ENCODE measurements at regions of chr20 and their contacts with region 1.

Region 1: DNA sequence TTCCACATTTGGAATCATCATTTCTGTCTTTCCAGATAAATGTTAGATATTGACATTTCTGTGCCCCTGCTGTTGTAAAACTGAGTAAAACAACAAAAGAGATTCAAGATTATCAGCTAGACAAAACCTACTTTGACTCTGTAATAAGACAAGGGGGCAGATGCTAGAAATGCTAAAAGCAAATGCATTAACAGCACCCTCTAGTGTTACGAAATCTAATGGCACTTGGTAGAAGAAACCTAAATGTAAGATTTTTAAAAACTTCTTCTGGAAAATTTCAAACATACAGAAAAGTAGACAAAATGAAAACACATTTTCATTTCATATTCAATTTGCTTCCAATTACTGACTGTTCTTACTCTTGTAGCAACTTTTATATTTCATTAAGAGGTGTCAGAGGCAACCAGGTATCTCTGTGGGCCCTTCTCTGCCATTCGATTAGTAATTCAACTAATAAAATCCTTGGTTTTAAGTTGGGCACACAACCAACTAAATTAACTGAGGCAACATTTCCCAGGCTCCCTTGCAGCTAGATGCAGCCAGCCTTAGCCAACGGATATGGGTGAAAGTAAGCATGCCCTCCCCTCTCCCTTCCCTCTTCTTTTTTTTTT is 45.0 kb downstream of the SLC23A2 start:
- DNase-seq: no peak
- H3K4me3 Mint-ChIP-seq: no peak overlapping the region
- H3K27ac Mint-ChIP-seq: no peak overlapping the region
- H3K4me1 Mint-ChIP-seq: peaks cover 26% of the 10 kb centered on the region
- H3K27me3 Mint-ChIP-seq: no peaks in the 10 kb centered on the region

Region 2: GRCh38 chr20:4740774-4741431 is 215.4 kb before region 1 on chr20:
- intact Hi-C with region 1: loop called (anchors 5 kb)
- DNase-seq: peak; percentile 50
- H3K4me3 Mint-ChIP-seq: no peak overlapping the region
- H3K27ac Mint-ChIP-seq: no peak overlapping the region
- H3K4me1 Mint-ChIP-seq: peaks cover 11% of the 10 kb centered on the region
- H3K27me3 Mint-ChIP-seq: peaks cover 8% of the 10 kb centered on the region

Region 3: GRCh38 chr20:4973330-4974097 is 17.2 kb after region 1 on chr20:
- intact Hi-C with region 1: loop called (anchors 2 kb)
- DNase-seq: peak; percentile 66
- H3K4me3 Mint-ChIP-seq: peak overlapping the region; percentile 69
- H3K27ac Mint-ChIP-seq: peak overlapping the region; percentile 85
- H3K4me1 Mint-ChIP-seq: peaks cover 17% of the 10 kb centered on the region
- H3K27me3 Mint-ChIP-seq: no peaks in the 10 kb centered on the region

Region 4: DNA sequence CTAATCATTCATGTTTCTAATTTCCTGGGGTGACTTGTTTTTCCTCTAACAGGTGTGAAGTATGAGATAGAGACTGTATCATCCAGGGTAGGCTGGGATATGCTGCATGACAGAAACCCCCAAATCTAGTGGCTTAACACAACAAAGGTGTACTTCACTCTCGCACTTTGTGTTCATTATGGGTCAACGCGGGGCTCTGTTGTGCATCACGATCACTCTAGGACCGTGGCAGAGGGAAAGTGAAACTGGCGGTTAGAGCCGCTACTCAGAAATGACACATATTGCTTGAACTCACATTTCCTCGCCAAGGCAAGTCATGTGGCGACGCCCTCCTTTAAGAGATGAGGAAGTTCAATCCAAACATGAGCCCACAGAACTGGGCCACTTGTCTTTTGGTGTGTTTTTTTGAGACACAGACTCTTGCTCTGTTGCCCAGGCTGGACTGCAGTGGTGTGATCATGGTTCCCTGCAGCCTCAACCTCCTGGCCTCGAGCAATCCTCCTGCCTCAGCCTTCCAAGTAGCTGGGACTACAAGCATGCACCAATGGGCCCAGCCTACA is 122.2 kb after region 1 on chr20:
- intact Hi-C with region 1: loop called (anchors 5 kb)
- DNase-seq: peak; percentile 84
- H3K4me3 Mint-ChIP-seq: peak overlapping the region; percentile 69
- H3K27ac Mint-ChIP-seq: peak overlapping the region; percentile 96
- H3K4me1 Mint-ChIP-seq: peaks cover 48% of the 10 kb centered on the region
- H3K27me3 Mint-ChIP-seq: no peaks in the 10 kb centered on the region